H1 (cell line): ENCODE measurements at regions of chr19 and their contacts with region 1.

Region 1: DNA sequence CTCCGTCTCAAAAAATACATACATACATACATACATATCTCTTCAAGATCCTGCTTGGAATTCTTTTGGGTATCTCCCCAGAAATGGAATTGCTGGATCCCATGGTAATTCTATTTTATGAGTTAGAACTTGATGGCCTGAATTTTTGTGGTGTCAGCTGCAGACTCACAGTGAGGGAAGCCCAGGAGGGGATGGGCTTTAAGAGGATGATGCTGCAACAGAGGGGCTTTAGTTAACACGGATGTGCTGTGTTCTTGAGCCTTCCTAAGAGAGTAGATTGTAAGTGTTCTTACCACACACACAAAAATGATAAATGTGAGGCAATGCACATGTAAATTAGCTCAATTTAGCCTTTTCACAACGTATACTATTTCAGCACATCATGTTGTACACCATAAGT is 31.8 kb downstream of the CACNG6 start:
- DNase-seq: no peak
- H3K4me3 ChIP-seq: no peak overlapping the region
- H3K27ac ChIP-seq: no peak overlapping the region
- H3K4me1 ChIP-seq: peaks cover 0 to 6% (median 3%) of the 10 kb centered on the region in 4 experiments; a peak in 4 of 7 replicates
- H3K27me3 ChIP-seq: peaks cover 0 to 2% (median 0%) of the 10 kb centered on the region in 4 experiments; a peak in 1 of 7 replicates
- CTCF ChIP-seq: no peak
- EP300 ChIP-seq: no peak
- POLR2A ChIP-seq: no peak
- RAD21 ChIP-seq: no peak

Region 2: GRCh38 chr19:53792721-53793433 is 230.3 kb before region 1 on chr19:
- CTCF ChIA-PET with region 1: interaction called, 13 read pairs
- POLR2A ChIA-PET with region 1: no interaction called
- DNase-seq: peak; percentile 88 to 94
- H3K4me3 ChIP-seq: no peak overlapping the region
- H3K27ac ChIP-seq: no peak overlapping the region
- H3K4me1 ChIP-seq: no peaks in the 10 kb centered on the region
- H3K27me3 ChIP-seq: no peaks in the 10 kb centered on the region
- CTCF ChIP-seq: peak; percentile 83 to 99 (median 99)
- EP300 ChIP-seq: no peak
- POLR2A ChIP-seq: no peak
- RAD21 ChIP-seq: peak; percentile 91

Region 3: DNA sequence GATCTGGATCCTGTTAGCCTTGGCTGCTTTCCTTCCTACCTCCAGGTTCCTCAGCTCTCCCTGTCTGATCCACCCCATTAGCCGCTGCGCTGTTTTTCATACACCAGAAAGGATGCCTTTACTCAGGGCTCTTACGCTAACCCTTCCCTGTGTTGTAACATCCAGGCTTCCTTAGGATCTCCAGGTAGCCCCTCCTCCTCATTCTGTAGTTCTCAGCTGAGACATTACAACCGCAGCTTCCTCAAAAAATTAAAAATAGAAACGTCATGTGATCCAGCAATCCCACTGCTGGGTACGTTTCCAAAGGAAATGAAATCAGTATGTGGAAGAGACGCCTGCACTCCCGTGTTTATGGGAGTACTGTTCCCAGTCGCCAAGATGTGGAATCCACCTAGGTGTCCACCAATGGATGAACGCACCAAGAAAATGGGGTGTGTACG is 173.9 kb before region 1 on chr19:
- CTCF ChIA-PET with region 1: interaction called, 20 read pairs
- POLR2A ChIA-PET with region 1: no interaction called
- DNase-seq: no peak
- H3K4me3 ChIP-seq: no peak overlapping the region
- H3K27ac ChIP-seq: no peak overlapping the region
- H3K4me1 ChIP-seq: 0 out of 7 replicates have a peak, but pooled peaks cover 0 to 2% (median 0%) of the 10 kb centered on the region in 4 experiments
- H3K27me3 ChIP-seq: no peaks in the 10 kb centered on the region
- CTCF ChIP-seq: no peak
- EP300 ChIP-seq: no peak
- POLR2A ChIP-seq: no peak
- RAD21 ChIP-seq: no peak

Region 4: GRCh38 chr19:53906211-53907192 is 116.7 kb before region 1 on chr19:
- CTCF ChIA-PET with region 1: interaction called, 32 read pairs
- POLR2A ChIA-PET with region 1: no interaction called
- DNase-seq: peak in 1 of 2 experiments; percentile 97
- H3K4me3 ChIP-seq: peak overlapping the region; percentile 34 to 72 (median 44)
- H3K27ac ChIP-seq: no peak overlapping the region
- H3K4me1 ChIP-seq: peaks cover 0 to 14% (median 4%) of the 10 kb centered on the region in 4 experiments; a peak in 5 of 7 replicates
- H3K27me3 ChIP-seq: peaks cover 0 to 22% (median 14%) of the 10 kb centered on the region in 4 experiments; a peak in 5 of 7 replicates
- CTCF ChIP-seq: peak; percentile 72 to 97 (median 82)
- EP300 ChIP-seq: no peak
- POLR2A ChIP-seq: no peak
- RAD21 ChIP-seq: peak; percentile 68 to 75

Region 5: GRCh38 chr19:53927739-53928138 is 95.5 kb before region 1 on chr19:
- CTCF ChIA-PET with region 1: interaction called, 10 read pairs
- POLR2A ChIA-PET with region 1: no interaction called
- DNase-seq: peak; percentile 79 to 88
- H3K4me3 ChIP-seq: no peak overlapping the region
- H3K27ac ChIP-seq: no peak overlapping the region
- H3K4me1 ChIP-seq: peaks cover 0 to 2% (median 0%) of the 10 kb centered on the region in 4 experiments; a peak in 2 of 7 replicates
- H3K27me3 ChIP-seq: no peaks in the 10 kb centered on the region
- CTCF ChIP-seq: no peak
- EP300 ChIP-seq: peak in 1 of 2 experiments; percentile 59; a peak in 1 of 3 replicates
- POLR2A ChIP-seq: no peak
- RAD21 ChIP-seq: 0 out of 4 replicates have a peak, but pooled peaks of 1 of the 2 experiments have one; percentile 8

Region 6: GRCh38 chr19:53977429-53977990 is 45.7 kb before region 1 on chr19:
- CTCF ChIA-PET with region 1: interaction called, 35 read pairs
- POLR2A ChIA-PET with region 1: interaction called, 17 read pairs
- DNase-seq: peak in 1 of 2 experiments; percentile 86
- H3K4me3 ChIP-seq: peak overlapping the region; percentile 53 to 78 (median 67); a peak in 7 of 8 replicates
- H3K27ac ChIP-seq: no peak overlapping the region
- H3K4me1 ChIP-seq: peaks cover 4 to 14% (median 9%) of the 10 kb centered on the region in 4 experiments
- H3K27me3 ChIP-seq: no peaks in the 10 kb centered on the region; a peak in 2 of 7 replicates
- CTCF ChIP-seq: no peak
- EP300 ChIP-seq: no peak
- POLR2A ChIP-seq: no peak
- RAD21 ChIP-seq: peak in 1 of 2 experiments; percentile 30; a peak in 1 of 4 replicates

Region 7: DNA sequence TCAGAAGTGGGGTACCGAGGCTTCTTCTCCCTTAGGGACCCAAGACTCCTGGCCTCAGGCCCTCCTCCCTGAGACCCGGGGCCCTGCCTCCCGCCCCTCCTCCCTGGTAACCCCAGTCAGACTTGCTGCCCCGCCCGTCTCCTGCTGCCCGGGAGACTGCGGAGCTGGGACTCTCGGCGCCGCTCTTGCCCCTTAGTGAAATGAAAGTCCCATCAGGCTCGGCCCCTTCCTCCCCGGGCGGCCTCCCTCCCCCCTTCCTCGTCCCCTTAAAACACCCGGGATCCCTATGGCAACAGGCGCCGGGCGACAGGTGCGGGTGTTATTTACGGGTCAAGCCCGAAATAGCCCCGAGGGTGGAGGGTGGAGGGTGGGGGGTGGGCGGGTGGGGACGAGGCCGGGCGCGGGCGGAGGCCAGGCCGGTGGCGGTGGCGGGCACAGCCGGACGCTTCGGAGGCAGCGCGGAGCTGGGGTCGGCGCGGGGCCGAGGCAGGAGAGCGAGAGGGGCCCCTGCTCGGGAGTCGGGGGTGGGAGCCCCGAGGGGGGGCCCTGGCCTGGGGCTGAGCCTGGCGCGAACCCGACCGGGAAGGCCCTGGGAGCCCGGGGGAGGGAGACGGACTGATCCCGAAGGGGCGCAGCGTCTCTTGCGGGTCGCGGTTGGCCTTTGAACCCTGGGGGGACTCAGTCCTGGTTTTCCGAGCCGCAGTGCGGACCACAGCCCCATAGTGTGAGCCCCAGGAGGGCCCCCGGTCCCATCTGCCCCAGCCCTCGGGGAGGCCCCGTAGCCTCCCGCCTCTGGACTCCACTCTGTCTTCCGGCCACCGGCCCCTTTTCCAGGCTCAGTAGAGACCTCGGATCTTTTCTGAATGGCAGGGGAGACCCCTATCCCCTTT is 31.7 kb before region 1 on chr19 and contains the start of gene CACNG6:
- CTCF ChIA-PET with region 1: interaction called, 33 read pairs
- POLR2A ChIA-PET with region 1: interaction called, 10 read pairs
- DNase-seq: peak in 1 of 2 experiments; percentile 77
- H3K4me3 ChIP-seq: peak within 1 kb of the TSS; percentile 36 to 64 (median 44); a peak in 7 of 8 replicates
- H3K27ac ChIP-seq: no peak within 1 kb of the TSS
- H3K4me1 ChIP-seq: peaks cover 0 to 15% (median 7%) of the 10 kb centered on the region in 4 experiments; a peak in 6 of 7 replicates
- H3K27me3 ChIP-seq: peaks cover 2 to 47% (median 32%) of the 10 kb centered on the region in 4 experiments
- CTCF ChIP-seq: no peak
- EP300 ChIP-seq: no peak
- POLR2A ChIP-seq: no peak
- RAD21 ChIP-seq: peak in 1 of 2 experiments; percentile 13; a peak in 1 of 4 replicates
- total RNA-seq, gene CACNG6: 1.2 and 1.4 TPM in 2 replicates